GM13977 (cell line): ENCODE measurements at regions of chrX and their contacts with region 1.

Region 1: DNA sequence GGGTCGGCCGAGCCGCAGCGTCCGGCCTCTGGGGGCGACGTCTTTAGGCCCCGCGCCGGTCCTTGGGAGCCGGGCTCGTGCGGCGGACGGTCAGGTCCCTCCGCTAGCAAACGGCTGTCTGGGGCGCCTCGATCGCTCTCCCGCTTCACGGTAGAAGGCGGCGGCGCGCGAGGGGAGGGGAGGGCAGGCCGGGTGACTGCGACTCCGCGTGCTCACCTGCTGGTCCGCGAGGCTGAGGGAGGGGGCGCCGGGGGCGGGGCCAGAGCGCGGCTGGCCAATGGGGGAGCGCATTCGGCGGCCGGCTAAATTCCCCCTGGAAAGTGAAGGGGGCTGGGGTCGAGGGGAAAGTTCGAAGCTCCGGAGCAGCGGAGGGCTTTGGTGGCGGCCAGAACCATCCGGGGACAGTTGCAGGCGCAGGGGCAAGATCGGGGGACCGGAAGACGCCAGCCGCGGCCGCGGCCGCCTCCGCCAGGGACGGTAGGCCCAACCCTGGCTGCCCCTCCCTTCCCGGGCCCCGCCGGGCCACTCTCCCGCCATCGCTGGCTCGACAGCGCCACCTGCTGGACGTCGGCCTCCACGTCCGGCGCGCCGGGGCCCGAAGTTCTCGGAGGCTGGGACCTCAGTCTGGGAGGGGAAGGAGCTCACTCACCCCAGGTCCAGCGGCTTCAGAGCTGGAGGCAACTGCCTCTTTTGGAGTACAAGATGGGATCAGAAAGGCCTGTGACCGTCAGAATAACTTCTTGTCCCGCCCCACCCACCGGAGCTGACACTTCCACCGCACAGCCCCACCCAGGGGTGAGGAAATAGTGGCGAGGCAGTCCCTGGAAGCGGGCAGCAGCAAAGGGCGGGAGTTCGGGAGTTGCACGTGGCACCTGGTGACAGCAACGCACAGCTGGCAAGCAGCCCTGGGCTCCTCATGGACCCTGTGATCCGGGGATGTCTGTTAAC is 49.9 kb downstream of the ELF4 start:
- DNase-seq: peak; percentile 92
- CTCF ChIP-seq: peak; percentile 82

Region 2: DNA sequence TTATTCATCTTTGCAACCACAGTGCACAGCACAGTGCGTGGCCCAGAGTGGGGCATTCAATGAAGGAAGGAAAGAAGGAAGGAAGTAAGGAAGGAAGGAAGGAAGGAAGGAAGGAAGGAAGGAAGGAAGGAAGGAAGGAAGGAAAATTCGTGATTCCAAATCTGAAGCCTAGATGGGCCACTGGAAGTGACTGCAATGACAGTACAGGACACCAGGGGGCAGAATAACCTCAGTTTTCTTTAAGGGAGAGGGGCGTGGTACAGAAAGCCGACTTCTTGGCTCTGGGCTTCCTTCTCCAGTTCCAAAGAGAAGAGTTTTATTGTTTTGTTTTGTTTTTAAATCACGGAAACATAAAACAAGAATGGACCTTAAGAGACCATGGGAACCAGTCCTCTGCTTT is 453.5 kb before region 1 on chrX:
- in situ Hi-C with region 1: loop called (anchors 25 kb)
- DNase-seq: peak; percentile 75
- CTCF ChIP-seq: peak; percentile 81

Region 3: DNA sequence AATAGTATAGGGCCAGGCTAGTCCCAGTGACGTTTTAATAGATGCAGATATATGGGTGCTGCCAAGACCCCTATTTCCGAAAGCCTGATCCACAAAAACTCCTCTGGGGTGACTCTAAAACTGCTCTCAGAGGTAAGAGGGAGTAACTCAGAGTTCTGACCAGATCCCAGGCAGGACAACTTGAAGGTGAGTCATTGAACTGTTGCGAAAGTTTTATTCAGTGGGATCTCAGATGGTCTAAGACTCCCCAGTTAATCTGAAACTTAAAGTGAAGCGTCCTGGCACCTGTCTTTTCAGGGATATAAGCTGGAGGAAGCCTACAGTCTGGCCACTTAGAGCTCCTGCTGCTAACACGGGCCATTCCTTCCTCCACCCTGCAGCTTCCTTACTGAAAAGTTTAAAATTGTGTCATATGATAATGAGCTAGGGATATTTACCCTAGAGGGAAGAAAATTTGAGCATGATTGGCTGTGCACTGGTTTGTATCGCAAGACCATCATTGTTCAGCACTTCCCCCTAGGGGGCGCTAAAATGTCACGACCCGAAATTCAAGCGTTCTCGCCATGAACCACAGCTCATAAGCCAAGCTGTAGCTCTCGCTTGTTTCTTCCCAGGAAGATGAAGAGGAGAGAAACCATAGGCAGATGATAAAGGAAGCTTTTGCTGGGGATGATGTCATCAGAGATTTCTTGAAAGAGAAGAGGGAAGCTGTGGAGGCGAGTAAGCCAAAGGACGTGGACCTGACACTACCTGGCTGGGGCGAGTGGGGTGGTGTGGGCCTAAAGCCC is 134.9 kb before region 1 on chrX:
- in situ Hi-C with region 1: loop called (anchors 10 kb)
- DNase-seq: peak; percentile 58
- CTCF ChIP-seq: peak; percentile 62

Region 4: GRCh38 chrX:130321550-130321949 is 261.2 kb after region 1 on chrX:
- in situ Hi-C with region 1: no loop called
- DNase-seq: peak; percentile 19
- CTCF ChIP-seq: no peak